CD8-positive, alpha-beta memory T cell (primary cell): ENCODE measurements at regions of chr17 and their contacts with region 1.

Region 1: DNA sequence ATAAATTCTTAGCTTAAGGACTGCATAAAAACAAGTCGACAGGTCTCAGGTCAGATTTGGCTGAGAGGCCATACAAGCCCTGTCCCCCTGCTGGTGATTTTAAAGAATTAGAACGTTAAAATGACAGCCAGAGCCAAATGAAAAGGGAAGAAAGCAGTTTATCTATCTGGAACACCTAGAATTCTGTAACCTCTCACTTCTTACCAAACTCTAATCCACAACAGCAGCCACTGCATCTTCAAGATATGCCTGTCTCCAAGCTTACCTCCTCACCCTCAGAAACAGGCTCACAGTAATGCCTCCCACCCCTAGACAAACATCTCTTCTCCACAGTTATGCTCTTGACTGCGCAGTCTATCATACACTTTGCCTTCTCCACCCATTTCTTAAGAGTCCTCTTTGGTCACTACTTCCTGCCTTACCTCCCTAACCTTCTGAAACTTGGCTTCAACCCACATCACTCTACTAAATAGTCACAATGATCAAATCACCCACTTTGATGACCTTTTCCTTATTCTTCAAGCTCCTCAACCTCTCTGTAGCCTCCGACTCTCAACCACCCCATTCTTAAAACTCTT is 14.2 kb downstream of the ANKFY1 start:
- DNase-seq: peak in 1 of 5 donors; percentile 4
- H3K4me3 ChIP-seq: no peak overlapping the region
- H3K4me3 Mint-ChIP-seq: no peak overlapping the region
- H3K27ac ChIP-seq: no peak overlapping the region
- H3K27ac Mint-ChIP-seq: peak overlapping the region in 6 of 8 donors; percentile 4 to 59 (median 32)
- H3K4me1 ChIP-seq: peaks cover 5% of the 10 kb centered on the region
- H3K4me1 Mint-ChIP-seq: peaks cover 48 to 76% (median 66%) of the 10 kb centered on the region in 3 donors
- H3K27me3 ChIP-seq: no peaks in the 10 kb centered on the region
- H3K27me3 Mint-ChIP-seq: no peaks in the 10 kb centered on the region

Region 2: GRCh38 chr17:4262703-4263102 is 13.2 kb after region 1 on chr17:
- CTCF ChIA-PET with region 1: interaction called, 12 read pairs
- POLR2A ChIA-PET with region 1: interaction called, 8 read pairs
- DNase-seq: no peak
- H3K4me3 ChIP-seq: peak overlapping the region; percentile 54
- H3K4me3 Mint-ChIP-seq: peak overlapping the region; percentile 87 to 95 (median 90)
- H3K27ac ChIP-seq: peak overlapping the region; percentile 81
- H3K27ac Mint-ChIP-seq: peak overlapping the region; percentile 48 to 89 (median 84)
- H3K4me1 ChIP-seq: peaks cover 28% of the 10 kb centered on the region
- H3K4me1 Mint-ChIP-seq: peaks cover 41 to 51% (median 45%) of the 10 kb centered on the region in 3 donors
- H3K27me3 ChIP-seq: no peaks in the 10 kb centered on the region
- H3K27me3 Mint-ChIP-seq: no peaks in the 10 kb centered on the region